B cell (primary cell): ENCODE measurements at regions of chr16 and their contacts with region 1.

Region 1: GRCh38 chr16:21584817-21585216 is 14.6 kb upstream of the METTL9 start:
- DNase-seq: no peak
- ATAC-seq: no peak
- H3K4me3 ChIP-seq: no peak overlapping the region
- H3K4me3 Mint-ChIP-seq: no peak overlapping the region
- H3K27ac ChIP-seq: no peak overlapping the region
- H3K27ac Mint-ChIP-seq: no peak overlapping the region
- H3K4me1 ChIP-seq: peaks cover 0 to 9% of the 10 kb centered on the region in 2 donors
- H3K4me1 Mint-ChIP-seq: peaks cover 6% of the 10 kb centered on the region
- H3K27me3 ChIP-seq: no peaks in the 10 kb centered on the region
- H3K27me3 Mint-ChIP-seq: no peaks in the 10 kb centered on the region
- CTCF ChIP-seq: no peak

Region 2: DNA sequence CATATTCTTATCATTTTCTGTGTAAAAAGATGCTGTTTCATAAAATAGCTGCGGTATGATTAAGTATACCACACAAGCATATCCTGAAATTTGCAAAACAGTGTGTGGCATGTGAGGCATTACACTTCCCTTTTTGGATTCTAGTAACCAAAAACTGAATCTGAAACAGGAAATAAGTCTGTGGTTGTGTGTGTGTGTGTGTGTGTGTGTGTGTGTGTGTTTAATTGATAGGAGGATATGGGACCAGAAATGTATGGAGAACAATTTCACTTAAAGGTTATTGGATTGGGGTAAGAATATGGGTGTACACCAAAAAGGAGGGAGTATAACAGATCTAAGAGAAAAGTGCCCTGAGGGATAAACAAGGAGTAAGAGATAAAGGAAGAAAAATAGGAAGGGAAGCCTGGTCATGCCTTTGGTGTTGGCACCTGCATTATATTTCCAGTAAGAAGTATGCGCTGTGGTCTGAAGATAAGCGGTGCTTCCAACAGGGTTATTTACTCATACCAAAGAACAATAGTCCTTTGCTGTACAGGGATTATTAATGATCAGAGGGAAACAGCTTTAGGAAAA is 680.2 kb before region 1 on chr16:
- CTCF ChIA-PET with region 1: no interaction called
- POLR2A ChIA-PET with region 1: no interaction called
- intact Hi-C with region 1: no loop called
- DNase-seq: peak; percentile 90
- ATAC-seq: peak; percentile 11
- H3K4me3 ChIP-seq: no peak overlapping the region
- H3K4me3 Mint-ChIP-seq: peak overlapping the region; percentile 46
- H3K27ac ChIP-seq: peak overlapping the region; percentile 52 to 57
- H3K27ac Mint-ChIP-seq: peak overlapping the region; percentile 68
- H3K4me1 ChIP-seq: peaks cover 46 to 47% of the 10 kb centered on the region in 2 donors
- H3K4me1 Mint-ChIP-seq: peaks cover 53% of the 10 kb centered on the region
- H3K27me3 ChIP-seq: no peaks in the 10 kb centered on the region
- H3K27me3 Mint-ChIP-seq: no peaks in the 10 kb centered on the region
- CTCF ChIP-seq: no peak

Region 3: GRCh38 chr16:21554795-21555585 is 29.8 kb before region 1 on chr16:
- CTCF ChIA-PET with region 1: no interaction called
- POLR2A ChIA-PET with region 1: no interaction called
- intact Hi-C with region 1: no loop called
- DNase-seq: peak; percentile 100
- ATAC-seq: peak; percentile 98
- H3K4me3 ChIP-seq: peak overlapping the region in 4 of 5 experiments; percentile 15 to 46 (median 34)
- H3K4me3 Mint-ChIP-seq: peak overlapping the region; percentile 84
- H3K27ac ChIP-seq: peak overlapping the region; percentile 70 to 72
- H3K27ac Mint-ChIP-seq: peak overlapping the region; percentile 94
- H3K4me1 ChIP-seq: peaks cover 27 to 34% of the 10 kb centered on the region in 2 donors
- H3K4me1 Mint-ChIP-seq: peaks cover 27% of the 10 kb centered on the region
- H3K27me3 ChIP-seq: no peaks in the 10 kb centered on the region
- H3K27me3 Mint-ChIP-seq: no peaks in the 10 kb centered on the region
- CTCF ChIP-seq: peak; percentile 100

Region 4: GRCh38 chr16:21656795-21657768 is 72.3 kb after region 1 on chr16:
- CTCF ChIA-PET with region 1: interaction called, 10 read pairs
- POLR2A ChIA-PET with region 1: no interaction called
- intact Hi-C with region 1: no loop called
- DNase-seq: peak; percentile 81
- ATAC-seq: peak; percentile 82
- H3K4me3 ChIP-seq: peak overlapping the region in 3 of 5 experiments; percentile 0 to 47 (median 44)
- H3K4me3 Mint-ChIP-seq: peak overlapping the region; percentile 79
- H3K27ac ChIP-seq: peak overlapping the region; percentile 51 to 78
- H3K27ac Mint-ChIP-seq: peak overlapping the region; percentile 88
- H3K4me1 ChIP-seq: peaks cover 74 to 77% of the 10 kb centered on the region in 2 donors
- H3K4me1 Mint-ChIP-seq: peaks cover 82% of the 10 kb centered on the region
- H3K27me3 ChIP-seq: no peaks in the 10 kb centered on the region
- H3K27me3 Mint-ChIP-seq: no peaks in the 10 kb centered on the region
- CTCF ChIP-seq: peak; percentile 92